ENCODE measurements at regions of chr19 and their contacts with region 1.

Region 1: GRCh38 chr19:40598121-40598917 is 2.9 kb upstream of the LTBP4 start:
- DNase-seq: peak; percentile 55 to 92 (median 78)
- ATAC-seq: peak; percentile 80
- H3K4me3 ChIP-seq: no peak overlapping the region
- H3K4me3 Mint-ChIP-seq: peak overlapping the region in 8 of 10 donors; percentile 35 to 76 (median 50)
- H3K27ac ChIP-seq: no peak overlapping the region
- H3K27ac Mint-ChIP-seq: peak overlapping the region in 1 of 9 donors; percentile 36
- H3K4me1 ChIP-seq: peaks cover 46 to 47% of the 10 kb centered on the region in 2 donors
- H3K4me1 Mint-ChIP-seq: peaks cover 21 to 60% (median 50%) of the 10 kb centered on the region in 7 donors
- H3K27me3 ChIP-seq: peaks cover 17 to 25% of the 10 kb centered on the region in 2 donors
- H3K27me3 Mint-ChIP-seq: peaks cover 29 to 73% (median 36%) of the 10 kb centered on the region in 5 donors

Region 2: DNA sequence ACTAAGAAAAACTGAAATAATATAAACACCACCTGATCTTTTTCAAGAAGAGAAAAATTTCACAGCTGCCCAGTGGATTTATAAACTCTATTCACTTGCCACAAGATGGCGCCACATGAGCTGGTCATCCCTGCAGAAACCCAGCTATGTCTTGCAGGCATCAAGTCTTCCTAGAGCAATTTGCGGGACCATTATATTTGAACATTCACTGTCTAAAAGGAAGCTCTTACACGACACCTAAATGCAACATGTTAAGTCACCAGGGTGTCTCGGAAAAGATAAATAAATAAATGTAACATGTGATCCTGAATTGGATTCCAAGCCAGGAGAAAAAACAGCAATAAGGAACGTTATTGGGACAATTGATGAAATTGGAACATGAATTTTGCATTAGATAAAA is 292.9 kb before region 1 on chr19:
- CTCF ChIA-PET with region 1: interaction called, 9 read pairs
- POLR2A ChIA-PET with region 1: no interaction called
- intact Hi-C with region 1: loop called (anchors 1 kb)
- DNase-seq: peak; percentile 39 to 75 (median 63)
- ATAC-seq: peak; percentile 80
- H3K4me3 ChIP-seq: no peak overlapping the region
- H3K4me3 Mint-ChIP-seq: no peak overlapping the region
- H3K27ac ChIP-seq: no peak overlapping the region
- H3K27ac Mint-ChIP-seq: no peak overlapping the region
- H3K4me1 ChIP-seq: no peaks in the 10 kb centered on the region
- H3K4me1 Mint-ChIP-seq: peaks cover 0 to 5% (median 4%) of the 10 kb centered on the region in 7 donors
- H3K27me3 ChIP-seq: no peaks in the 10 kb centered on the region
- H3K27me3 Mint-ChIP-seq: no peaks in the 10 kb centered on the region

Region 3: DNA sequence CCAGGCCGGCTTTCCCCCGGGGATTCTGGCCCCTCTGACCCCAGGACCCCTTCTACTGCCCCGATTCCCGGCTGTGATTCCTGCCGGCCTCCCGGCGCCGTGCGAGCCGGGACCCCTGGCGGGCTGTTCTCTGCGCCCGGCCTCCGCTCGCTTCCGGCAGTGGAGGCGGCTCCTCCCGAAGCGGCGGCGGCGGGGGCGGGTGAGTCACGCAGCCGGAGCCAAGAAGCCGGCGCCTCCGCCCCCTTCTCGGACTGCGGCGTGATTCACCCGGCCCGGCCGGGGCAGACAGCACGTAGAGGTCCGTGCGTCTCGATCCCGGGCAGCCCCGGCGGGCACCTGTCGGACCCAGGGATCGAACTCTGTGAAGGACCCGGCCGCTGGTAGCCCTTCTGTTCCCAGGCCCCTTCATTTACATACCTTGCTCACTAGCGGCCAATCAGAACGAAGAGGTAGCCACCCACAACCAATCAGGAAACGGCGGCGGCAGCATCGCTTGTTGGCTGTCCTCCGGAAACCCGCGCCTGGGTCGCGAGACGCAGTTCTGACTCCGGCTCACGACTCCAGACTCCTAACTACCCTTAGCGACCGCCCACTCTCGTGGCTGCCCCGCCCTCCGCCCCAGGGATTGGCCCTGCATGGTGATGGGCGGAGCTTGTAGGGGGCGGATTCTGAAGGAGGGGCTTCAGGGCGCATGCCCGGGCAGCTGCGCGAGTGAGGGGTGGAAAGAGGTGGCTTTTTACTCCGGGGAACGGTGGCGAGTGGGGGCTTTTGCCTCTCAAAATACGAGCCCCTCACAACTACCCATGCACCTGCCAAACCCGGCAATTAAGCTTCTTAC is 172.7 kb before region 1 on chr19 and contains the start of gene SERTAD1:
- CTCF ChIA-PET with region 1: no interaction called
- POLR2A ChIA-PET with region 1: interaction called, 3 read pairs
- intact Hi-C with region 1: loop called in 1 of 2 experiments (anchors 2 kb)
- DNase-seq: peak; percentile 99 to 100 (median 100)
- ATAC-seq: peak; percentile 96
- H3K4me3 ChIP-seq: peak within 1 kb of the TSS; percentile 77
- H3K4me3 Mint-ChIP-seq: peak within 1 kb of the TSS; percentile 90 to 99 (median 96)
- H3K27ac ChIP-seq: peak within 1 kb of the TSS; percentile 87
- H3K27ac Mint-ChIP-seq: peak within 1 kb of the TSS; percentile 92 to 100 (median 98)
- H3K4me1 ChIP-seq: peaks cover 15 to 18% of the 10 kb centered on the region in 2 donors
- H3K4me1 Mint-ChIP-seq: peaks cover 12 to 38% (median 24%) of the 10 kb centered on the region in 7 donors
- H3K27me3 ChIP-seq: no peaks in the 10 kb centered on the region
- H3K27me3 Mint-ChIP-seq: peaks cover 0 to 2% (median 0%) of the 10 kb centered on the region in 5 donors
- total RNA-seq, gene SERTAD1: 8.1 to 30.9 (median 13.5) TPM

Region 4: GRCh38 chr19:40457953-40458596 is 140.2 kb before region 1 on chr19:
- CTCF ChIA-PET with region 1: no interaction called
- POLR2A ChIA-PET with region 1: no interaction called
- intact Hi-C with region 1: no loop called
- DNase-seq: no peak
- ATAC-seq: no peak
- H3K4me3 ChIP-seq: no peak overlapping the region
- H3K4me3 Mint-ChIP-seq: no peak overlapping the region
- H3K27ac ChIP-seq: no peak overlapping the region
- H3K27ac Mint-ChIP-seq: peak overlapping the region in 1 of 9 donors; percentile 13
- H3K4me1 ChIP-seq: no peaks in the 10 kb centered on the region
- H3K4me1 Mint-ChIP-seq: peaks cover 0 to 7% (median 0%) of the 10 kb centered on the region in 7 donors
- H3K27me3 ChIP-seq: no peaks in the 10 kb centered on the region
- H3K27me3 Mint-ChIP-seq: no peaks in the 10 kb centered on the region

Region 5: GRCh38 chr19:40529093-40529954 is 69.0 kb before region 1 on chr19:
- CTCF ChIA-PET with region 1: interaction called, 4 read pairs
- POLR2A ChIA-PET with region 1: interaction called, 7 read pairs
- intact Hi-C with region 1: loop called (anchors 1 kb)
- DNase-seq: peak; percentile 84 to 97 (median 89)
- ATAC-seq: peak; percentile 97
- H3K4me3 ChIP-seq: peak overlapping the region; percentile 72
- H3K4me3 Mint-ChIP-seq: peak overlapping the region; percentile 66 to 87 (median 81)
- H3K27ac ChIP-seq: no peak overlapping the region
- H3K27ac Mint-ChIP-seq: peak overlapping the region in 6 of 9 donors; percentile 36 to 90 (median 60)
- H3K4me1 ChIP-seq: peaks cover 9 to 16% of the 10 kb centered on the region in 2 donors
- H3K4me1 Mint-ChIP-seq: peaks cover 5 to 25% (median 12%) of the 10 kb centered on the region in 7 donors
- H3K27me3 ChIP-seq: peaks cover 0 to 3% of the 10 kb centered on the region in 2 donors
- H3K27me3 Mint-ChIP-seq: peaks cover 13 to 37% (median 24%) of the 10 kb centered on the region in 5 donors

Region 6: GRCh38 chr19:40542202-40542859 is 56.0 kb before region 1 on chr19:
- CTCF ChIA-PET with region 1: interaction called, 5 read pairs
- POLR2A ChIA-PET with region 1: interaction called, 3 read pairs
- intact Hi-C with region 1: loop called (anchors 1 to 2 kb)
- DNase-seq: no peak
- ATAC-seq: no peak
- H3K4me3 ChIP-seq: no peak overlapping the region
- H3K4me3 Mint-ChIP-seq: no peak overlapping the region
- H3K27ac ChIP-seq: no peak overlapping the region
- H3K27ac Mint-ChIP-seq: no peak overlapping the region
- H3K4me1 ChIP-seq: no peaks in the 10 kb centered on the region
- H3K4me1 Mint-ChIP-seq: peaks cover 0 to 3% (median 0%) of the 10 kb centered on the region in 7 donors
- H3K27me3 ChIP-seq: no peaks in the 10 kb centered on the region
- H3K27me3 Mint-ChIP-seq: peaks cover 0 to 9% (median 6%) of the 10 kb centered on the region in 5 donors

Region 7: GRCh38 chr19:40549007-40549708 is 49.2 kb before region 1 on chr19:
- CTCF ChIA-PET with region 1: interaction called, 6 read pairs
- POLR2A ChIA-PET with region 1: interaction called, 3 read pairs
- intact Hi-C with region 1: loop called (anchors 1 kb)
- DNase-seq: peak; percentile 26 to 74 (median 57)
- ATAC-seq: peak; percentile 95
- H3K4me3 ChIP-seq: no peak overlapping the region
- H3K4me3 Mint-ChIP-seq: peak overlapping the region in 8 of 10 donors; percentile 13 to 73 (median 54)
- H3K27ac ChIP-seq: no peak overlapping the region
- H3K27ac Mint-ChIP-seq: no peak overlapping the region
- H3K4me1 ChIP-seq: peaks cover 0 to 5% of the 10 kb centered on the region in 2 donors
- H3K4me1 Mint-ChIP-seq: peaks cover 0 to 14% (median 12%) of the 10 kb centered on the region in 7 donors
- H3K27me3 ChIP-seq: peaks cover 0 to 10% of the 10 kb centered on the region in 2 donors
- H3K27me3 Mint-ChIP-seq: peaks cover 38 to 60% (median 52%) of the 10 kb centered on the region in 5 donors

Region 8: DNA sequence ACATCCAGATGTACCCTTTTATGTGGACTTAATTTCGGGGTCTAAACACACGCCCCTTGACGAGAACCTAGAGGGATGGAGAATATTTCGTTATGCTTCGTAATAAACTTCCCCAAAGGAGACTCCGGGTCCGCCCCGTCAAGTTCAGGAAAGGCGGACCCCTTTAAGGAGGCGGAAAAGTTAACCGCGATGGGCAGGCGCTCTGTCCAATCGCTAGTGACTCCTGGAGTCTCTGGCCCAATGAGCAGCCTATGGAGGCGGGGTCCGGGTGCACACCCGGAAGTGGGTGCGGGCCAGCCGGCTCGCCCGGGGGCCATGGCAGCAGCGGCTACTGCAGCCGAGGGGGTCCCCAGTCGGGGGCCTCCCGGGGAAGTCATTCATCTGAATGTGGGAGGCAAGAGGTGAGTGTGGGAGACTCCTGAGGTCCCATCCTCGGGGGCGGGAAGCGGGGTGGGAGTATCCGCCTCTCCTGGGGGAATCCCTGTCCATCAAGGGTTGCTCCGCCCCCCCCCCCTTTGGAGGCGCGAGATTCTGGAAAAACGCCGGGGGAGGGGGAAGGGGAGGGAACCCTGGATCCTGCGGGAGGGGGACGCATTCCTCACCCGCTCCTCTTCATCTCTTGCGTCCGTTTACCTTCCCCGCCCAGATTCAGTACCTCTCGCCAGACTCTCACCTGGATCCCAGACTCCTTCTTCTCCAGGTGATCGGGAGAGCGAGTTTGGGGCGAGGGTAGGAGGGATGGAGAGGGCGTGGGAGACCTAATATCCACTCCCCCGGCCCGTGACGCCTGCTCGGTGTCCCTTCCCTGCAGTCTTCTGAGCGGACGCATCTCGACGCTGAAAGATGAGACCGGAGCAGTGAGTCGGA is 21.5 kb before region 1 on chr19 and contains the start of gene SHKBP1:
- CTCF ChIA-PET with region 1: interaction called, 3 read pairs
- POLR2A ChIA-PET with region 1: interaction called, 6 read pairs
- intact Hi-C with region 1: loop called (anchors 1 to 2 kb)
- DNase-seq: peak; percentile 84 to 93 (median 92)
- ATAC-seq: peak; percentile 97
- H3K4me3 ChIP-seq: peak within 1 kb of the TSS; percentile 84
- H3K4me3 Mint-ChIP-seq: peak within 1 kb of the TSS; percentile 80 to 96 (median 90)
- H3K27ac ChIP-seq: peak within 1 kb of the TSS; percentile 77
- H3K27ac Mint-ChIP-seq: peak within 1 kb of the TSS; percentile 79 to 96 (median 87)
- H3K4me1 ChIP-seq: peaks cover 14 to 22% of the 10 kb centered on the region in 2 donors
- H3K4me1 Mint-ChIP-seq: peaks cover 16 to 26% (median 20%) of the 10 kb centered on the region in 7 donors
- H3K27me3 ChIP-seq: no peaks in the 10 kb centered on the region
- H3K27me3 Mint-ChIP-seq: no peaks in the 10 kb centered on the region
- total RNA-seq, gene SHKBP1: 98.4 to 218 (median 139) TPM

Region 9: DNA sequence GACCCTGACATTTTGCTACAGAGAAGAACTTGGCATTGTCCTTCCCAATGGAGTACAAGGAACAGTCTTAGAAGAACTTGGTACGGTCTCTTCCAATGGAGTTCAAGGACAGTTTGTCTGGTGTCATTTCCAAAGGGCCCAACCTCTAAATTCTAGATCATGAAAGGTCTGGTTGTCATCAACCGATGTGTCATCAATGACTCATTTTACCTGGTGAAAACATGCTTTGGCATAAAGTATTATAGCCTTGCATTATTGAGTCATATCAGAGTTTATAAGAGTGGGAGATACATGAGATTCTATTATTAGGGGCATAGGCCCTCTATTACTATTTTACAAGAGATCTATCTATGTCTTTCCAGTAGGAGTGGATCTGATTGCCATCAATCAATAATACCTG is 397.0 kb after region 1 on chr19:
- CTCF ChIA-PET with region 1: no interaction called
- POLR2A ChIA-PET with region 1: no interaction called
- intact Hi-C with region 1: no loop called
- DNase-seq: no peak
- ATAC-seq: no peak
- H3K4me3 ChIP-seq: no peak overlapping the region
- H3K4me3 Mint-ChIP-seq: no peak overlapping the region
- H3K27ac ChIP-seq: no peak overlapping the region
- H3K27ac Mint-ChIP-seq: no peak overlapping the region
- H3K4me1 ChIP-seq: no peaks in the 10 kb centered on the region
- H3K4me1 Mint-ChIP-seq: no peaks in the 10 kb centered on the region
- H3K27me3 ChIP-seq: no peaks in the 10 kb centered on the region
- H3K27me3 Mint-ChIP-seq: peaks cover 0 to 9% (median 9%) of the 10 kb centered on the region in 5 donors

Measured in naive thymus-derived CD4-positive, alpha-beta T cell (primary cell).